ENCODE measurements at regions of chr15 and their contacts with region 1.

Region 1: DNA sequence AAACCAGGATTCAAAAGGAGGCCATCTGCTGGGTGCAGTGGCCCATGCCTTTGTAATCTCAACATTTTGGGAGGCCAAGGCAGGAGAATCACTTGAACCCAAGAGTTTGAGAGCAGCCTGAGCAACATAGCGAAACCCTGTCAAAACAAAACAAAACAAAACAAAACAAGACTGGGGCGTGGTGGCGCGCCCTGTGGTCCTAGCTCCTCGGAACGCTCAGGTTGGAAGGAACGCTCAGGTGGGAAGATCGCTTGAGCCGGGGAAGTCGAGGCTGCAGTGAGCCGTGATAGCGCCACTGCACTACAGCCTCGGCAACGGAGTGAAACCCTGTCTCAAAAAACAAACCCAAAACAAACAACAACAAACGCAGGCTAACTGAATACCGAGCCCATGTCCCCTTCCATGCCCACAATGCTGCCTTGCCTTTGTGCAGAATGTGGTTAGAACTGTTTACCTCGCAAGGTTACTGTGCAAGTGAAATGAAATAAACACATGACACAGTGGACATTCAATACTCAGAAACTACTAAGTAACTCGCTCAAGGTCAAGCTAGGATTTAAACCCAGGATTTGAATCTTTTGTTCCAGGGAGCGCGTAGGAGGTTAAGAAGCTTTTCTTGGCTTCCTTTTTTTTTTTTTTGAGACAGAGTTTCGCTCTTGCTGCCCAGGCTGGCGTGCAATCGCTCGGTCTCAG is 766 bp upstream of the EMC4 start:
- DNase-seq: no peak
- H3K4me3 ChIP-seq: peak overlapping the region; percentile 69 to 70
- H3K27ac ChIP-seq: peak overlapping the region; percentile 84 to 85
- H3K4me1 ChIP-seq: no peaks in the 10 kb centered on the region
- H3K27me3 ChIP-seq: no peaks in the 10 kb centered on the region
- CTCF ChIP-seq: no peak
- POLR2A ChIP-seq: no peak

Region 2: DNA sequence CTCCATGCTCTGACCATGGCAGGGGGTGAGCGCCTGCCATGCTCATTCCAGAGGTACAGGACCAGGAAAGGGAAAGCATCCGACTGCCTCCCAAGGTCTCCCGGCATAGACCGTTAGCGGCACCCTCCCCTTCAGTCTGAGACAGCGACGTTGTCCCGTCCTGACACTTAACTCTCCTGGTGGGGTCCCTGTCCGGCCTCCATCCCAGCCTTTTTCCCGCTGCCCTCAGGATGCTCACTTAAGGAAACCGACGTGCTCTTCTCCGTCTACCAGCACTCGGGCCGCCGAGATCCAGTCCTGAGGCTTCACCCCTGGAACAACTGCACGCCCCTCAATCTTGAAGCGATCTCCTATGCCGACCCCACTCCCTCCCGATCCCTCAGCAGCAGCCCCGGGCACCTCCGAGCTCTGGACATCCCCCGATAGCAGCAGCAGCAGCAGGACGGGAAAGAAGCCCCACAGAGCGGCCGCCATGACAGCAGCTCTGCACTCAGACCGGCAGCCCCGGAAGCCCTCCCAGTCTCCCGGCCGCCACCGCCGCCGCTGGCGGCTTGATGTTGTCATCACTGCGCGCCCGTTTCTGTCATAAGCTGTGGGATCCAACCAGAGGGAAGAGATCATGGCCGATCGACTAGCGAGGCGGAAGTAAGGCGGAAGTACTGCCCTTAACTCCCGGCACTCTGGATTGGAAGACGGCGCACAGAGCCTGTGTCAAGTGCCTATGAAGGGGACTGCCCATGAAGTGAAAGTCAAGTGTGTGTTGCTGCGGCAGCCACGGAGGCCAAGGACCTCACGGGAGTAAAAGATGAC is 122.5 kb before region 1 on chr15 and contains the starts of genes EMC7 and PGBD4:
- intact Hi-C with region 1: loop called (anchors 1 kb)
- DNase-seq: peak; percentile 99
- H3K4me3 ChIP-seq: peak within 1 kb of the TSS; percentile 75 to 80
- H3K27ac ChIP-seq: peak within 1 kb of the TSS; percentile 72 to 81
- H3K4me1 ChIP-seq: peaks cover 5% of the 10 kb centered on the region
- H3K27me3 ChIP-seq: no peaks in the 10 kb centered on the region
- CTCF ChIP-seq: peak in 2 of 4 experiments; percentile 12 to 36
- POLR2A ChIP-seq: peak; percentile 70
- total RNA-seq, gene EMC7: 52.7 to 56.0 TPM
- total RNA-seq, gene PGBD4: 1.2 to 1.3 TPM